Activated T-helper 2 cell treated with anti-CD3 and anti-CD28 coated beads, Interferon-gamma antibody, Interleukin-2, Interleukin-4, amounts not matched to agents 10 μg/mL and 5 μg/mL and 100 μg/mL, durations not matched to agents 14 hours and 24 hours and 36 hours (primary cell): ENCODE measurements at regions of chr19 and their contacts with region 1.

Region 1: DNA sequence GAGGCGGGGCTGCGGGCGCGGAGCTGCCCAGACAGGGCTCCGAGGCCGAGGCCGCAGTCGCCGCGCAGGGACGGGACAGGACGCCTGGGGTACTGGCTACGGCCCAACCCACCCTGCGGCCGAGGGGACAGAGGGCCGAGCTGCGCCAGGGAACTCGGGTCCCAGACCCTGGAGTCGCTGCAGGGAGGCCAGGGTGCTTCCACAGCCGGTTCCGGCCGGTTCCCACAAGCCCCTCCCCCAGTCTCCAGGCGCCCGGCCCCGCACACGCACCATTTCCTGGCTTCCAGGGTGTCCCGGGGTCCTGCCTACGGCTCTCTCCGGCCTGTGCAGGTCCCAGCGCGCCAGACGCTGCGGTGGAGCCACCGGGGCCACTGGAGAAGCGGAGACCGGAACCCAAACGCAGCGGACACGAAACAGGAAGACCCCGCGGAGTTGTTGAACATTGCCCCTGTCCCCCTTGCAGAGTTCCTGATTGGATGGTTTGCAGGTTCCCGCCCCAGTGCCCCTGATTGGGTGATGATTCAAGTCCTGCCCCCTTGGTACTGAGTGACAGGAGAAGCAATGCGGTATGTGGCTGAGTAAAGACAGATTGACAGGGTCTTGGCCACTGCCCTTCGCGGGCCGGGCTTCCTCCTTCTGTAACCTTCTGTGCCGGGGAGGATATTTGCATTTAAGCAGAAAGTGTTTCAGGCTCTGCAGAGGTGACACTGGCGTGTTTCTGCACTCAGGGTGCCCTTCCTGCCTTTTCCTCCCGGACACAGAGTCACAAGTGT is at the start of gene ZNF564:
- DNase-seq: peak; percentile 93
- H3K4me3 Mint-ChIP-seq: peak within 1 kb of the TSS; percentile 94
- H3K27ac Mint-ChIP-seq: peak within 1 kb of the TSS; percentile 90
- H3K4me1 Mint-ChIP-seq: peaks cover 19% of the 10 kb centered on the region
- H3K27me3 Mint-ChIP-seq: no peaks in the 10 kb centered on the region
- total RNA-seq, gene ZNF564: 7.4 and 7.6 TPM in 2 replicates

Region 2: GRCh38 chr19:12333162-12334159 is 217.8 kb before region 1 on chr19 and contains the start of gene ZNF563:
- intact Hi-C with region 1: loop called (anchors 5 kb)
- DNase-seq: peak; percentile 97
- H3K4me3 Mint-ChIP-seq: peak within 1 kb of the TSS; percentile 98
- H3K27ac Mint-ChIP-seq: peak within 1 kb of the TSS; percentile 97
- H3K4me1 Mint-ChIP-seq: peaks cover 32% of the 10 kb centered on the region
- H3K27me3 Mint-ChIP-seq: no peaks in the 10 kb centered on the region
- total RNA-seq, gene ZNF563: 2.3 and 4.2 TPM in 2 replicates

Region 3: GRCh38 chr19:12495002-12495802 is 56.0 kb before region 1 on chr19:
- intact Hi-C with region 1: loop called (anchors 10 kb)
- DNase-seq: peak; percentile 84
- H3K4me3 Mint-ChIP-seq: peak overlapping the region; percentile 79
- H3K27ac Mint-ChIP-seq: peak overlapping the region; percentile 59
- H3K4me1 Mint-ChIP-seq: peaks cover 10% of the 10 kb centered on the region
- H3K27me3 Mint-ChIP-seq: no peaks in the 10 kb centered on the region

Region 4: DNA sequence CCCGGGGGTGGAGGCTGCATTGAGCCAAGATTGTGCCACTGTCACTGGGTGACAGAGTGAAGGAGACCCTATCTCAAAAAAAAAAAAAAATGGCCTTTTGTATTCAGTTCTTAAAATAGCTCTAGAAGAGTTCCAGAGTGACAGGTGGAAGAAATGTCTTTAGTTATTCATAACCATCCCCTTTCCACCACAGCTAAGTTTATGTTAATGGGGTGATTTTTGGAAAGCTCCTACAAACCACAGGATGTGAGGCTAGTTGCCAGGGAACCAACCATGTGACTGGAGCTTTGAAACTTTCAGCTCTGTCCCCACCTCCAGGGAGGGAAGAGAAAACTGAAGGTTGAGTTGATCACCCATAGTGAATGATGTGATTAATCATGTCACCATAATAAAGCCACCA is 52.5 kb after region 1 on chr19:
- intact Hi-C with region 1: no loop called
- DNase-seq: peak; percentile 56
- H3K4me3 Mint-ChIP-seq: no peak overlapping the region
- H3K27ac Mint-ChIP-seq: peak overlapping the region; percentile 12
- H3K4me1 Mint-ChIP-seq: peaks cover 8% of the 10 kb centered on the region
- H3K27me3 Mint-ChIP-seq: no peaks in the 10 kb centered on the region

Region 5: GRCh38 chr19:12666265-12667048 is 115.2 kb after region 1 on chr19 and contains the starts of genes MAN2B1 and WDR83:
- intact Hi-C with region 1: loop called (anchors 1 kb)
- DNase-seq: peak; percentile 73
- H3K4me3 Mint-ChIP-seq: peak within 1 kb of the TSS; percentile 93
- H3K27ac Mint-ChIP-seq: peak within 1 kb of the TSS; percentile 91
- H3K4me1 Mint-ChIP-seq: peaks cover 37% of the 10 kb centered on the region
- H3K27me3 Mint-ChIP-seq: no peaks in the 10 kb centered on the region
- total RNA-seq, gene MAN2B1: 133 and 147 TPM in 2 replicates
- total RNA-seq, gene WDR83: 23.1 and 23.7 TPM in 2 replicates